ENCODE measurements at regions of chr7 and their contacts with region 1.

Region 1: DNA sequence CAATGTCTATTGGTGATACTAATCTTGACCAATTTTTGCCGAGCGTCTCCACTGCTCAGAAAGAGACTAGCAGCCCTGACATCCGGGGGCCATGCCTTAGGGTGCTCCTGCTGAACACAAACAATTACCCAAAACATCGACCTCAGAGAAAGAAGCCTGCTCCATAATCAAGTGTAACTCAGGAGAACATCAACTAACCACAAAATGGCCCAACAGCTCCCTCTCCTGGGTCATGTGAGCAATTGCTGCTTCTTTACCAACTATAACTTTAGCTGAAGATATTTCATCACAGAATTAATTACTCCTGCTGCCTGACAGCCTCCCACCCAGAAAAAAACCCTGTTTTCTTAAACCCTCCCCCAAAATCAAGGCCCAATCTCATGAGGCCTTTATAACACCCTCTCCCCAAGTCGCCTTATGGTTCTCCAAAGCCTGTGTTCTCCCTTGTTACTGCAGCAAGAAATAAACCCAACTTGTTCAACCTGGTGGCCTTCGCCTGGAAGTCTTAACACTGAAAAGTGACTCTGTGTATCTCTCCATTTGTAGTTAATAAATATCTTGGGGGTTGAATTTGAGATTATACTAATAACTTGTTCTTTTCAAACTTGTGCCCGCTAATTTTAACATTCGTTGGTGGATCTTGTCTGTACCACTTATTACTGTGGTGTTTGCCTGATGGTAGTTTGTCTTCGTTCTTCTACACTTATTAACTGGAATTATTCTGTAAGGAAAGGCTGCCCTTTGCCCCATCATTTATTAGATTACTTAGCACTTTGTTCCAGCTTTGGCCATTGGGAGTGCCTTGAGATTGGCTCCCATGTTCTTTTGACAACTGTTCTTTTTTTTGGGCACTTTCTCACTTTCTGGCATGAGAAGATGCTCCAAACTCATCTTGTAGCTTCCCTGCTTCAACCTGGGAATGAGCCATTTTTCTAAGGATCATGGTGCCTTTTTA is 21.2 kb upstream of the RAMP3 start:
- DNase-seq: peak in 1 of 2 donors; percentile 60
- ATAC-seq: peak in 7 of 8 donors; percentile 50 to 84 (median 80)
- H3K4me3 ChIP-seq: no peak overlapping the region
- H3K27ac ChIP-seq: no peak overlapping the region
- H3K4me1 ChIP-seq: no peaks in the 10 kb centered on the region
- H3K27me3 ChIP-seq: peaks cover 0 to 4% (median 0%) of the 10 kb centered on the region in 7 donors
- CTCF ChIP-seq: peak; percentile 69 to 92 (median 88)

Region 2: DNA sequence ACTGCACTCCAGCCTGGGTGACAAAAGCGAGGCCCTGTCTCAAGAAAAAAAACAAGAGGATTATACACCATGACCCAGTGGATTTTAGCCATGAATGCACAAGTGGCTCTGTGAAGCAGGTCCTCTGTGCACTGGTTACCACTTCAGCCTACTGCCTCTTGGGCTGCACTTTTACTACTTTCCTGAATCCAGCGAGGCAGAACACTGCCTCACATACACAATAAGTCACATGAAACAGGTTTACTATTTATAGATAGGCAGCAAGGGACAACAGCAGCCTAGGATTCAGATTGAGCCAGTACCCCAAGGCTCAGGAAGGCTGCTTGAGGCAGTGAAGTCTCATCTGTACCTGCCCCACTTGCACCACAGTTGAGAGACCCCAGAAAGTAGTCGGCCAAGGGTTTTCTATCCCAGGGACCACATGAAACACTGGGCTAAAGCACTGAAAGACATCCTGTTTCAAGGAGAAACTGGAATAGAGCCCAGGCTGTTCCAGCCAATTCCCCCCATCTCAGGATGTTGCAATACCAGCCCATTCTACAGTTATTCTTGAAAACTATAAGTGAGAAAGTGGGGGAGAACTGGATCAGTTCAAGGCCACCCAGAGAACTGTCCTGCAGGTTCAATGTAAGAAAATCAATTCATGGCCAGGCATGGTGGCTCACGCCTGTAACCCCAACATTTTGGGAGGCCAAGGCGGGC is 540.3 kb before region 1 on chr7:
- intact Hi-C with region 1: loop called in 1 of 10 experiments (anchors 10 kb)
- DNase-seq: peak in 1 of 2 donors; percentile 14
- ATAC-seq: peak; percentile 71 to 97 (median 88)
- H3K4me3 ChIP-seq: no peak overlapping the region
- H3K27ac ChIP-seq: peak overlapping the region; percentile 23 to 77 (median 72)
- H3K4me1 ChIP-seq: peaks cover 0 to 13% (median 8%) of the 10 kb centered on the region in 9 donors
- H3K27me3 ChIP-seq: no peaks in the 10 kb centered on the region
- CTCF ChIP-seq: peak in 2 of 9 donors; percentile 11 to 12

Region 3: DNA sequence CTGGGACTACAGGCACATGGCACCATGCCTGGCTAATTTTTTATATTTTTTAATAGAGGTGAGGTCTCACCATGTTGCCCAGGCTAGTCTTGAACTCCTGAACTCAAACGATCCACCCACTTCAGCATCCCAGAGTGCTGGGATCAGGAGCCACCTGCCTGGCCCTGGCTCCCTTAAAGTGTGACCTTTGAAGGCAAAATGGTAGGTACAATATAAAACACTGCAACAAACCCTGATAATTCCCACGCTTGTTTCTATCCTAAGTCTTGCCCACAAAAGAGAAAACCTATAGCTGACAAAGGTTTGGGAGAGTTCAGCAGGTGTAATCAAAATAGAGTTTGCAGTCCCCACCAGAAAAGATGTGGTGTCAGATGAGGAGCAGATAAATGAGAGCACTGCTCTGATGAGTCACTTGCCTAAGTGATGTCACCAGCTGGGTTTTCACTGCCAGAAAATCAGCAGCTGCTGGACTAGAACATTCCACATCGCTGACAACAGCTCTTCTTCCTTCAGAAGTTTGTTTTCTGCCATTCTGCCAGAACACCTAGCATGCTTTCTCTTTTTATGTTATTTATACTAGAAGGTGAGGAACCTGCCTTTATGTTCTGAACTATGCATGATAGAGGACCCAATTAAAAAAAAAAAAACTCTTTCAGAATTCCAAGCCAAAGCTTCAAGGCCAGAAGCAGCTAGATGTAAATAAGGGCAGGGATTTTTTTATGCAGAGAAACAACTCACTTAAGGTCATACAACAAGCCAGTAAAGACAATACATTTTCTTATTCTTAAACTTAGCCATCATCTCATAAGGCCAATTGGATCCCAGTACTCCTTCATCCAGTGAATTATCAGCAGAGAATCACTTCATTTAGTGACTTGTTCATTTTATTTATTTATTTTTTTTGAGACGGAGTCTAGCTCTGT is 269.0 kb before region 1 on chr7:
- intact Hi-C with region 1: loop called in 2 of 10 experiments (anchors 10 kb)
- DNase-seq: no peak
- ATAC-seq: peak in 6 of 8 donors; percentile 45 to 86 (median 60)
- H3K4me3 ChIP-seq: no peak overlapping the region
- H3K27ac ChIP-seq: peak overlapping the region in 1 of 10 donors; percentile 28
- H3K4me1 ChIP-seq: peaks cover 0 to 12% (median 5%) of the 10 kb centered on the region in 9 donors
- H3K27me3 ChIP-seq: no peaks in the 10 kb centered on the region
- CTCF ChIP-seq: no peak

Region 4: DNA sequence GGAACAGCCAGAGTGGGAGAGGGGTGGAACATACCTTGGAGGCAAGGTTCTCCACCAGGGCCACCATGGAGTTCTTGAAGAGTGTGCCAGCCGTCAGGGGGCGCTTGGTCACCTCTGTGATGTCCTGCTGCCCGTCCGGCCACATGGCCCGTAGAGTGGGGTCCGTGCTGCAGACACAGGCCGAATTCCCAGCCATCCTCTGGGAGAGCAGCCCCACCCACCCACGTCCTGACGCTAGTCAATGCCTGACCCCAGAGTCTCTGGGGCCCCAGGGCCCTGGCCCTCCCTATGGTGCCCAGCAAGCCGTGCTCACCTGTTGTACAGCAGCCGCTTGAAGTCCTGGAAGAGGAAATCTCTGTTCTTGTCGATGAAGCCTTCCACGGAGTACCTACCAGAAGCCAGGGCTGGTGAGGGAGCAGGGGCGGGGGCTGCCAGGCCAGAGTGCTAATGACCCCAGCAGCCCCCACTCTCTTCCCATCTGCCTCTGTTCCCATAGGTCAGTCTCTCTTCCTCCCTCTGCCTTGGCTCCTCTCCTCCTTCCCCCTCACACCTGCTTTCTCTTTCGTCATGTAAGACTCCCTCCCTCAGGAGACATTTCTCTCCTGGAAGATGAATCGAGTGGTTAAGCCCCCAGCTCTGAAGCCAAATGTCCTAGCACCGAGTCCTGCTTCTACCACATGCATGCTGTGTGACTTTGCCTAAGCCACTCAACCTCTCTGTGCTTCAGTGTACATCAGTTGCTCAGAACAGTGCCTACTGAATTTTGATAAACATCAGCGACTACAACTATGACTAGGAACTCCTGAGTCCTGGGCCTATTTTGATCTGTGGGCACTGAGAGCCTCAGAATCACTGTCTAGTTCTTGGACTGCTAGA is 168.6 kb before region 1 on chr7:
- intact Hi-C with region 1: loop called in 7 of 10 experiments (anchors 1 to 5 kb)
- DNase-seq: no peak
- ATAC-seq: peak in 4 of 8 donors; percentile 6 to 40 (median 28)
- H3K4me3 ChIP-seq: no peak overlapping the region
- H3K27ac ChIP-seq: no peak overlapping the region
- H3K4me1 ChIP-seq: peaks cover under 1 to 5% (median 3%) of the 10 kb centered on the region in 9 donors
- H3K27me3 ChIP-seq: peaks cover 0 to 8% (median 3%) of the 10 kb centered on the region in 7 donors
- CTCF ChIP-seq: peak in 6 of 9 donors; percentile 13 to 49 (median 34)

Region 5: DNA sequence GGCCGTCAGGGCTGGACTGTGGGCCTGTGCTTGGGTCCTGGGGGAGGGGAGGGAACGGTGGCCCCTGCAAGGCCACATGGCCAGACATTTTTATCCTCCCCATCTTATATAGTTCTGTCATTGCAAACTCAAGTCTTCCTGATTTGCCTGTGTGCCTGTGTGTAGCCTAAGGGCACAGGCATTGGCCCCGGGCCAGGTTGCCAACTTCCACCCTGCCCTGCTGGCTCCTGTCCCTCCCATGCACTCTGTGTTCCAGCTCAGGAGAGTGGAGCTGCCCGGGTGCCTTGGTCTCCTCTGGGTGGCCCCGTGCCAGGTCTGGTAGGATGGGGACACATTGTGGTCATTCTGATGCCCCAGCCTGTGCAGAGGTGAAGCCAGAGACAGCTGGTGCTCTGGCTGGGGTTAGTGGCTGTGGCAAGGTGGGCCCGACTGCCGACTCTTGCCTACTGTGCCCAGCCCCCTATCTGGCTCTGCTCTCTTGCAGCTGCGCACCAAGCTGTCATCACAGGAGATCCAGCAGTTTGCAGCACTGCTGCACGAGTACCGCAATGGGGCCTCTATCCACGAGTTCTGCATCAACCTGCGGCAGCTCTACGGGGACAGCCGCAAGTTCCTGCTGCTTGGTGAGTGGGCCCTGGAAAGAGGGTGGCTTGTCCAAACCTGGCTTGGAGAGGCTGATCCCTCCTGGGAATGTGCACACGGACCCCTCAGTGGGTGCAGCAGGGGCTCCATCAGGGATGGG is 62.4 kb before region 1 on chr7:
- intact Hi-C with region 1: loop called in 1 of 10 experiments (anchors 10 kb)
- DNase-seq: peak; percentile 53 to 70
- ATAC-seq: peak in 7 of 8 donors; percentile 44 to 88 (median 68)
- H3K4me3 ChIP-seq: no peak overlapping the region
- H3K27ac ChIP-seq: no peak overlapping the region
- H3K4me1 ChIP-seq: peaks cover 0 to 12% (median 3%) of the 10 kb centered on the region in 9 donors
- H3K27me3 ChIP-seq: no peaks in the 10 kb centered on the region
- CTCF ChIP-seq: no peak

Region 6: GRCh38 chr7:45709168-45710042 is 573.0 kb after region 1 on chr7:
- intact Hi-C with region 1: no loop called
- DNase-seq: peak in 1 of 2 donors; percentile 52
- ATAC-seq: peak; percentile 45 to 93 (median 74)
- H3K4me3 ChIP-seq: no peak overlapping the region
- H3K27ac ChIP-seq: peak overlapping the region in 2 of 10 donors; percentile 15 to 74
- H3K4me1 ChIP-seq: peaks cover 0 to 12% (median 0%) of the 10 kb centered on the region in 9 donors
- H3K27me3 ChIP-seq: no peaks in the 10 kb centered on the region
- CTCF ChIP-seq: no peak

Measured in heart right ventricle (tissue), 16 donors.